CD4-positive, alpha-beta T cell (primary cell): ENCODE measurements at regions of chr16 and their contacts with region 1.

Region 1: DNA sequence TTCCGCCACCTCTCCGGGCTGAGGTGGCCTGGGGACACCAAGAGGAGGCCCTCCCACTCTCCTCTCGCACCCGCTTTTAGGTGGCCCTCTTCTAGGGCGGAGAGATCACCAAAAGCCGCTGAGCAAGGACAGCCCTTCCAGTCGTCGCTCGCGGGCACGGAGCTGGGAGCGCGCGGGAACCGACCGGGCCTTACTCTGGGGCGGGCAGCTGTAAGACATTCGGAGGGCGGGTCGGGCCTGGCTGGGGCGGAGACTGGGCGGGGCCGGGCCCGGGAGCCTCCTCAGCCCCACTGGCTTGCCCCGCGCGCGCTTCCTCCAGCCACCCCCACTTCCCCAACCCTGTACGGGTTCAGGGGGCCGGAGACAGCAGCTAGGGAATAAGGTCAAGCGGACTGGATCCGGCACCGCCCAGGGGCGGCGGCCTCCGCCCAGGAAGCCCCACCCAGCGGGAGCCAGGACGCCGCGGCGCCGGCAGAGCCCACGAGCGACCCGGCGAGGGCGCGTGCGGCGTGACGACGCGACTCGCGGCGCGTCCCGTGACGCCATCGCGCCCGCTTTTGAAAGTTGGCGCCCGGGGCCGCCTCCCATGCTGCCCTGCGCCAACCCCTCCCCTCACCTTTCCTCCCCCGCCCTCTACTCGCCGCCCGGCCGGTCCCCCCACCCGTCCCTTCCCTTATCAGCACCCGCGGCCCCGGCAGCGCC is 351 bp upstream of the CTCF start:
- DNase-seq: peak; percentile 93 to 99 (median 96)
- ATAC-seq: peak; percentile 74
- H3K4me3 ChIP-seq: peak overlapping the region; percentile 83
- H3K4me3 Mint-ChIP-seq: peak overlapping the region; percentile 91
- H3K27ac ChIP-seq: peak overlapping the region; percentile 82 to 86
- H3K27ac Mint-ChIP-seq: peak overlapping the region; percentile 93
- H3K4me1 ChIP-seq: peaks cover 46% of the 10 kb centered on the region
- H3K4me1 Mint-ChIP-seq: peaks cover 45% of the 10 kb centered on the region
- H3K27me3 ChIP-seq: no peaks in the 10 kb centered on the region
- H3K27me3 Mint-ChIP-seq: no peaks in the 10 kb centered on the region
- CTCF ChIP-seq: peak; percentile 18

Region 2: GRCh38 chr16:67393035-67393787 is 168.8 kb before region 1 on chr16 and contains the start of gene TPPP3:
- CTCF ChIA-PET with region 1: no interaction called
- POLR2A ChIA-PET with region 1: no interaction called
- intact Hi-C with region 1: no loop called
- DNase-seq: peak in 7 of 14 experiments; percentile 18 to 74 (median 43)
- ATAC-seq: peak; percentile 63
- H3K4me3 ChIP-seq: peak within 1 kb of the TSS; percentile 28
- H3K4me3 Mint-ChIP-seq: peak within 1 kb of the TSS; percentile 68
- H3K27ac ChIP-seq: no peak within 1 kb of the TSS
- H3K27ac Mint-ChIP-seq: no peak within 1 kb of the TSS
- H3K4me1 ChIP-seq: peaks cover 28% of the 10 kb centered on the region
- H3K4me1 Mint-ChIP-seq: peaks cover 8% of the 10 kb centered on the region
- H3K27me3 ChIP-seq: peaks cover 37 to 44% of the 10 kb centered on the region in 2 experiments
- H3K27me3 Mint-ChIP-seq: peaks cover 41% of the 10 kb centered on the region
- CTCF ChIP-seq: peak; percentile 32
- total RNA-seq, gene TPPP3: not detected

Region 3: GRCh38 chr16:67480833-67481560 is 81.0 kb before region 1 on chr16 and contains the start of gene ATP6V0D1:
- CTCF ChIA-PET with region 1: interaction called, 11 read pairs
- POLR2A ChIA-PET with region 1: interaction called, 16 read pairs
- intact Hi-C with region 1: no loop called
- DNase-seq: peak; percentile 96 to 100 (median 99)
- ATAC-seq: peak; percentile 87
- H3K4me3 ChIP-seq: peak within 1 kb of the TSS; percentile 100
- H3K4me3 Mint-ChIP-seq: peak within 1 kb of the TSS; percentile 98
- H3K27ac ChIP-seq: peak within 1 kb of the TSS; percentile 98 to 100
- H3K27ac Mint-ChIP-seq: peak within 1 kb of the TSS; percentile 95
- H3K4me1 ChIP-seq: peaks cover 53% of the 10 kb centered on the region
- H3K4me1 Mint-ChIP-seq: peaks cover 54% of the 10 kb centered on the region
- H3K27me3 ChIP-seq: no peaks in the 10 kb centered on the region
- H3K27me3 Mint-ChIP-seq: no peaks in the 10 kb centered on the region
- CTCF ChIP-seq: peak; percentile 81
- total RNA-seq, gene ATP6V0D1: 39.4 to 41.7 TPM

Region 4: DNA sequence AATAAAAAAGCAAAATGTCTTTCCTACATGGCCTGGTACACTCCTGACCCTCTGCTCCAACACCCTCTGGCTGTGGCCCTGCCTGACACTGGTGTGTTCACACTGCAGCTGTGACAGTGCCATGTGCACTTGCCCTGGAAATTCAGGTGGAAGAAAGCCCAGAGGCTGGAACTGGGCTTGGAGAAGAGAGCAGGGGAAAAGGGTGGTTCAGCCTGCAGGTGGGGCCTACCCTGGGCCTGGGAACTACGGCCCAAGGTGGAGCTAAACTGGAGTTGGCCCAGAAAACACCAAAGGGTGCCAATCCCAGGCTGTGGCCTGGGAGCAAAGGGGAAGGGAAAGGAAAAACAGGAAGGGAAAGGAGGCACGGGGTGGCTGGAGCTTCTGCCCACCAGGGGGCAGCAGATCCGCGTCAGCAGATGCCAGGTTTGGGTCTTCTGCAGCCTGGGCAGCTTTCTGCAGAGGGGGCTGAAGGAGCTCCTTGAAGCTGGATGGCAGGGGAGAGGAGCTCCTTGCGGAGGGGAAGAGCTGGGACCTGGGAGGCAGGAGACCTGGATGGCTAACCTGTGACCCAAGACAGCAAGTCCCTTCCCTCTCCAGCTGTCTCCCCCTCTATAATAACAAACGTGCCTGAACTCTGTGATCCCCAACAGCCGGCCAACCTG is 15.1 kb before region 1 on chr16:
- CTCF ChIA-PET with region 1: interaction called, 119 read pairs
- POLR2A ChIA-PET with region 1: interaction called, 358 read pairs
- intact Hi-C with region 1: loop called (anchors 1 kb)
- DNase-seq: peak; percentile 61 to 88 (median 72)
- ATAC-seq: peak; percentile 22
- H3K4me3 ChIP-seq: peak overlapping the region; percentile 44
- H3K4me3 Mint-ChIP-seq: peak overlapping the region; percentile 72
- H3K27ac ChIP-seq: peak overlapping the region; percentile 72 to 76
- H3K27ac Mint-ChIP-seq: peak overlapping the region; percentile 92
- H3K4me1 ChIP-seq: peaks cover 51% of the 10 kb centered on the region
- H3K4me1 Mint-ChIP-seq: peaks cover 50% of the 10 kb centered on the region
- H3K27me3 ChIP-seq: no peaks in the 10 kb centered on the region
- H3K27me3 Mint-ChIP-seq: no peaks in the 10 kb centered on the region
- CTCF ChIP-seq: peak; percentile 99

Region 5: DNA sequence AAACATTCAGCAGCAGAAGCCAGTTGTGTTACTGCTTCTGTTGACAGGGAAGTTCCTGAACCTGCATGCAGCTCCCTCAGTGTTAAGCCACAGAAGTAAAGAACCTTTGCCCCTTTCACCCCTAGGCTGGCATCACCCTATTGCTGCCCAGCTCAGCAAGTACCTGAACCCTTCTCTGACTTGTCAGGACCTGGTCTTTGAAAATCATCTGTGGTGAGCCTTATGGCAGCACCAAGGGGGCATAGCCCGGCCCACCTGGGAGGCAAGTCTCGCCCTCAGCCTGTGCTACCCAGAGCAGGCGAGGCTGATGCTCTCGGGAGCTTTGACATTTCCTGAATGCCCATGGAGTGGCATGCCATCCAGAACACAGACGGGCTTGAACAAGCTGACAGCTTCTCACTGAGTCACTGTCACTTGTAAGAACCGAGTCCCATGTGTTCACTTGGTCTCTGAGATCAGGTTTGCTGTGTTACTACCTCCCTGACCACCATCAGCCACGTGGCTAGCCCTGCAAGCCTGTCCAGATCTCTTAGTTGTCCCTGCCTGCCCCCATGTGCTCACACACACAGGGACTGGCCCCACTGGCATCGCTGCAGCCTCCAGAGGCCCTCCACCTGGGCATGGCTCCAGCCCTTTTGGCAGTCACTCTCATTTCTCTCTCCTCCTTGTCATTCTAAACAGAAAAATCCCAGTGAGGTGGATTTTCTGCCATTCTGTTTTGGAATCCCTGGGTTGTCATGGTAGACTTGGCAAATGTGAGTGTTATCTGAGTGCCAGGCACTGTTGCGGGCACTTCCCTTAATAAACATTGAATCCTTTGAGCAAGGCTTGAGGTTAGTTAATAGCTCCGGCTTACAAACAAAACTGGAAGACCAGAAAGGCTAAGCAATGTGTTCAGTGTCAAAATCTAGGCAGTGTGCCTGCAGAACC is 80.1 kb after region 1 on chr16:
- CTCF ChIA-PET with region 1: interaction called, 27 read pairs
- POLR2A ChIA-PET with region 1: interaction called, 75 read pairs
- intact Hi-C with region 1: loop called (anchors 1 kb)
- DNase-seq: no peak
- ATAC-seq: no peak
- H3K4me3 ChIP-seq: no peak overlapping the region
- H3K4me3 Mint-ChIP-seq: no peak overlapping the region
- H3K27ac ChIP-seq: no peak overlapping the region
- H3K27ac Mint-ChIP-seq: no peak overlapping the region
- H3K4me1 ChIP-seq: peaks cover 31% of the 10 kb centered on the region
- H3K4me1 Mint-ChIP-seq: no peaks in the 10 kb centered on the region
- H3K27me3 ChIP-seq: no peaks in the 10 kb centered on the region
- H3K27me3 Mint-ChIP-seq: no peaks in the 10 kb centered on the region
- CTCF ChIP-seq: no peak

Region 6: GRCh38 chr16:67667817-67668494 is 106.0 kb after region 1 on chr16:
- CTCF ChIA-PET with region 1: interaction called, 14 read pairs
- POLR2A ChIA-PET with region 1: interaction called, 25 read pairs
- intact Hi-C with region 1: loop called in 1 of 2 experiments (anchors 2 kb)
- DNase-seq: peak; percentile 71 to 94 (median 81)
- ATAC-seq: peak; percentile 91
- H3K4me3 ChIP-seq: peak overlapping the region; percentile 65
- H3K4me3 Mint-ChIP-seq: peak overlapping the region; percentile 90
- H3K27ac ChIP-seq: peak overlapping the region; percentile 28 to 44
- H3K27ac Mint-ChIP-seq: peak overlapping the region; percentile 55
- H3K4me1 ChIP-seq: peaks cover 36% of the 10 kb centered on the region
- H3K4me1 Mint-ChIP-seq: peaks cover 28% of the 10 kb centered on the region
- H3K27me3 ChIP-seq: no peaks in the 10 kb centered on the region
- H3K27me3 Mint-ChIP-seq: no peaks in the 10 kb centered on the region
- CTCF ChIP-seq: peak; percentile 74

Region 7: GRCh38 chr16:67806428-67807147 is 244.6 kb after region 1 on chr16 and contains the starts of genes RANBP10 and TSNAXIP1:
- CTCF ChIA-PET with region 1: no interaction called
- POLR2A ChIA-PET with region 1: interaction called, 7 read pairs
- intact Hi-C with region 1: loop called in 1 of 2 experiments (anchors 5 kb)
- DNase-seq: peak; percentile 90 to 99 (median 93)
- ATAC-seq: peak; percentile 92
- H3K4me3 ChIP-seq: peak within 1 kb of the TSS; percentile 97
- H3K4me3 Mint-ChIP-seq: peak within 1 kb of the TSS; percentile 91
- H3K27ac ChIP-seq: peak within 1 kb of the TSS; percentile 69 to 75
- H3K27ac Mint-ChIP-seq: peak within 1 kb of the TSS; percentile 76
- H3K4me1 ChIP-seq: peaks cover 50% of the 10 kb centered on the region
- H3K4me1 Mint-ChIP-seq: peaks cover 43% of the 10 kb centered on the region
- H3K27me3 ChIP-seq: no peaks in the 10 kb centered on the region
- H3K27me3 Mint-ChIP-seq: no peaks in the 10 kb centered on the region
- CTCF ChIP-seq: no peak
- total RNA-seq, gene RANBP10: 12.0 to 13.6 TPM
- total RNA-seq, gene TSNAXIP1: 0.52 to 0.61 TPM